GM10248 (cell line): ENCODE measurements at regions of chr20 and their contacts with region 1.

Region 1: GRCh38 chr20:58447511-58448391 is 58.7 kb downstream of the VAPB start:
- DNase-seq: peak; percentile 63
- CTCF ChIP-seq: peak; percentile 83

Region 2: GRCh38 chr20:58236612-58237330 is 211.0 kb before region 1 on chr20:
- CTCF ChIA-PET with region 1: interaction called, 27 read pairs
- POLR2A ChIA-PET with region 1: no interaction called
- DNase-seq: peak; percentile 85
- CTCF ChIP-seq: peak; percentile 97

Region 3: GRCh38 chr20:58246346-58246745 is 201.4 kb before region 1 on chr20:
- CTCF ChIA-PET with region 1: interaction called, 18 read pairs
- POLR2A ChIA-PET with region 1: no interaction called
- DNase-seq: no peak
- CTCF ChIP-seq: no peak

Region 4: DNA sequence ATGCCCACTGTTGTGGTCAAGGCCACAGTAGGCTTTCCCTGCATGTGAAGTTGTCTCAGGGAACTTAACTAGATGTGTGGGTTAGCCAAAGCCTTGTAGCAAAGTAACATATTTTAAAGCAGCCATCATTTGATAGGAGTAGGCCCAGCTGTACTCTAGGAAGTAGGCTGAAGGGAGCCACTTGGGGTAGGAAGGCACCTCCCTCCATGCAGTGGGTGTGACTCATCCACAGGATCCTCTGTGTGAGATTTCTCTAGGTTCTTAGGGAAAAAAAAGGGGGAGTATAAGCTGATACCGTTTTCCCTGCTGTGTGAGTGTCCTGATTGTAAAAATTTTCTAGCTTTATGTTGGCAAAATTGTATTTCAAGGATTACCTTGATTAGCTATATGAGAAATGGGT is 14.0 kb before region 1 on chr20:
- CTCF ChIA-PET with region 1: interaction called, 23 read pairs
- POLR2A ChIA-PET with region 1: interaction called, 3 read pairs
- DNase-seq: no peak
- CTCF ChIP-seq: no peak

Region 5: DNA sequence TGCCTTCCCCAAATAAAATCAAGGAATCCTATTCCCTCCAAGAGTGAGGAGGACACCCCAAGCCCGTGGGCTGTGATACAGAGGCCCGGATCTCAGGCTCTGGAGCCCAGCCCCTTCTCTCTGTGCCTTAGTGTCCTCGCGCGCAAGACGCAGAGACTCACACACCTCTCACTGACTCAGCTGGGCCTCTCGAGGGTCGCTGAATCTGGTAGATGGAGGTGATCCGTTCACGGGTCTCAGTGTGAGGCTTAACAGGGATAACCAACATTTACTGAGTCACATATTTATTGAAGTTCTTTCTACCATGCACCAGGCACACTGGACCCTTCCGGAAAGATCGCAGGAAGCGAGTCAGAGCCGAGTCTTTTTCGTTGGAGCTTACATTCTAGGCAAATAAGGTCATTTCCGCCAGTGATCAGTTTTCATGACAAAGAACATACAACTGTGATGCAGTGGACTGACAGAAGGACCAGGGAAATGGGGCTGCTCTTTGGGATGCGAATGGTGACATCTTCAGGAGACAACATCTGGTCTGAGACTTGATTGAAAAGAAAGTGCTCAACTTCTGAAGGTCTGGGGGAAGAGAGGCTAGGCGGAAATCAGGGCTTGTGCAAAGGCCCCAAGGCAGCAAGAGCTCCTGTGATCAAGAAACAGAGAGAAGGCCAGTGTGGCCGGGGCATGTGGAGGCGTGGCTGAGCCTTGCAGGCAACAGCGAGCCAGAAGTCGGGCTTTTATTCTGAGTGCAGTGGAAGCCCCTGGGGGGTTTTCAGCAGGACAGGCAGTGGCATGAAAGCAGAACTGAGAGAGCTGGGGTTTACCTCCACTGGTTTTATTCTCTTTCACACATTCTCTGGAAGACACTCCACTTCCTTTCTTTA is 10.7 kb after region 1 on chr20:
- CTCF ChIA-PET with region 1: interaction called, 31 read pairs
- POLR2A ChIA-PET with region 1: no interaction called
- DNase-seq: peak; percentile 89
- CTCF ChIP-seq: no peak

Region 6: DNA sequence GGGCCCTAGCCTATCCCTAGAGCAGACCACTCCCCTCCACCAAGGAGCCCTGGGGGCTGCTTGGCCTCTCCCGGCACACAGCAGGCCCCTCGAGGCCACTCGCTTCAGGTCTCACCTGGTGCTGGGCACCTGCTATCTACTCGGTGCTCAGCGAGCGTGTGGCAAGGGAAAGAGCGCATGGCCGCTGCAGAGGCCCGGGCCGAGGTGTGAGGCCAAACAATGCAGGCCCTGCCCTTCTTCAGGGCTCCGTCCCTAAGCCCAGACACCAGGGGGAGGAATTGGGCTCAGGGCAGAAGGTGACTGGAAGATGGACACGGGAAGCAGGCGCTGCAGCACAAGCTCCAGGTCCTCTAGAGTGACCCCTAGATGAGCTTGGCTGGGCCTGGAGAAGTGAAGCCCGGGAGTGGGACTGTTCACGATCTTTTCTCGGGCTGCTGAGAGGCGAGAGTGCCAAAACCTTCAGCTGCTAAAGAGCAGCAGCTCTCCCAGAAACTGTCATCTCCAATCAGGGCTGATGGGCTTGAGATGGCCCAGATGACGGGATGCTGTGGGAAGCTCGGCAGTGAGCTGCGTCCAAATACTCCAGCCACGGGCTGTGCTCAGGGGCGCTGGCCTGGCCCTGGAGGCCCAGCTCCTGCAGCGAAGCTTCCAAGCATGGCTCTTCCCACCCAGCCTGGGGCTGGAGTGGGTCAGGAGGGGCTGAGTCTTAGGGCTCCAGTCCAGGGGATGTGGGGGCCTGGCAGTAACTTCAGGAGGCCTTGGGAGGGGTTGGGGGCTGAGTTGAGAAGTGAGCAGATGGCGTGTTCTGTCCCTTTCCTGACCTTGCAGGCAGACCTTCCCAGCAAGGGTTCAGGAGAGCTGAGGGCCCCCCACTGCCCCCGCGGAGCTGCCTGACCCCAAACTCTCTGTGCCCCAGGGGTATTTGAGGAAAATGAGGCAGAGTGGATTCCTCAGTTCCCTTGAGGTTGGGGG is 23.7 kb after region 1 on chr20:
- CTCF ChIA-PET with region 1: no interaction called
- POLR2A ChIA-PET with region 1: no interaction called
- DNase-seq: no peak
- CTCF ChIP-seq: no peak